Activated CD4-positive, alpha-beta memory T cell treated with anti-CD3 and anti-CD28 coated beads for 36 hours (primary cell): ENCODE measurements at regions of chr22 and their contacts with region 1.

Region 1: DNA sequence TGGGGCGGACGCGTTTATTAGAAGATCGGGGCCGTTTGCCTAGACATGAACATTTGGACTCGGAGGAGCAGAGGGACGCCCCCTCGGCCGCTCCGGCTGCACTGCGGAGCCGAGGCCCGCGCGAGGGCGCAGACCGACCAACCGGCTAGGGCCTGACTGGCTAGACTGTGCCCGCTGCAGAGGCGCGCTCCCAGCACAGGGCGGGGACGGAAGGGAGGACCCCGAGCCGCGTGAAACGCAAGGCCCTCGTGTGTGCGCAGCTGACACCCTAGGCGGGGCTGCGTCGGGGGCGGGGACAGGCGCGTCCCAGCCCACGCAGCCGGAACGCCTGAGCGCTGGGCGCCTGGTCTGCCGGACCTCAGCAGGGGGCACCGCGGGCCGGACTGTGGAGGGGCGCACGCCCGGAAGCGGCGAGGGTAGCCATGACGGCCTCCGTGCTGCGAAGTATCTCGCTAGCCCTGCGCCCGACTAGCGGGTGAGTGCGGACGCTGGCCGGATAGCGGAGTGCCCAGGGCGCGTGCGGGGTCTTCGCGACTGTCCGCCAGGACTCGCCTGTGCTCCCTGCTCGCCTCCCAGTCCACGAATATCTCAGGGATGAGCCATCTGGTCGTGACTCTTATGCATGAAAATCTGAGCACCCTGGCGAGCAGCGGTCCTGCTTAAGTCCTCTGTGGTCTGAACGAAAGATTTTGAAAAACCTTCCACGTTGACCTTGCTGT is at the start of gene MRPL40:
- DNase-seq: peak; percentile 94
- H3K4me3 Mint-ChIP-seq: peak within 1 kb of the TSS; percentile 81
- H3K27ac Mint-ChIP-seq: peak within 1 kb of the TSS; percentile 91
- H3K4me1 Mint-ChIP-seq: peaks cover 40% of the 10 kb centered on the region
- H3K27me3 Mint-ChIP-seq: no peaks in the 10 kb centered on the region
- total RNA-seq, gene MRPL40: 36.5 to 38.5 TPM

Region 2: DNA sequence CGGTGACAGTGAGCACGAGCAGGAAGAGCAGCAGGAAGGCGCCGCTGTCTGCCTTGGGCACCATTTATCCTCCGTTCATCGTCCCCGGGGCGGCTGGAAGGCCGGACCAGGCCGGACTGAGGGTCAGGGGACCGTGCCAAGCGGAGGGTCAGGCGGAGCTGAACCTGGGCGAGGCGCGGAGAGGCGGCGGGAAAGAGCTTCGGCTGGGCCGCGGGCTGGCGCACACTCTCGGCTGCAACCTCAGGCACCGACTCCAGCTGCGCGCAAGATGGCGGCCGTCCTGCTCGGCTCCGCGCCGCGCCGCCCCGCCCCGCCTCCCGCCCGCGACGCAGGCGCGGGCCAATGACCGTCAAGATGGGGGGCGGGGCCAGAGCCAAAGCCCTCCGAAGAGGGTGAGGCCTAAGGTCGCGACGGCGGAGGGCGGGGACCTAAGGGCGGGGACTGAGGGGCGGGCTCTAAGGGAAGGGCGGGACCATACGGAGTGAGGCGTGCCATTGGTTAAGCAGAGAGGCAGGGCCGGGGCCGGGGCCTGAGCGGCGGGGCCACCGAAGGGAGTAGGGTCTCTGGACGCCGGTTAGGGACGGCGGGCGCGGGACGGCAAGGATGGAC is 310.0 kb before region 1 on chr22 and contains the start of gene DGCR2:
- CTCF ChIA-PET with region 1: no interaction called
- POLR2A ChIA-PET with region 1: no interaction called
- intact Hi-C with region 1: loop called (anchors 1 kb)
- DNase-seq: peak; percentile 98
- H3K4me3 Mint-ChIP-seq: peak within 1 kb of the TSS; percentile 88
- H3K27ac Mint-ChIP-seq: peak within 1 kb of the TSS; percentile 58
- H3K4me1 Mint-ChIP-seq: peaks cover 45% of the 10 kb centered on the region
- H3K27me3 Mint-ChIP-seq: no peaks in the 10 kb centered on the region
- total RNA-seq, gene DGCR2: 17.4 to 17.6 TPM

Region 3: DNA sequence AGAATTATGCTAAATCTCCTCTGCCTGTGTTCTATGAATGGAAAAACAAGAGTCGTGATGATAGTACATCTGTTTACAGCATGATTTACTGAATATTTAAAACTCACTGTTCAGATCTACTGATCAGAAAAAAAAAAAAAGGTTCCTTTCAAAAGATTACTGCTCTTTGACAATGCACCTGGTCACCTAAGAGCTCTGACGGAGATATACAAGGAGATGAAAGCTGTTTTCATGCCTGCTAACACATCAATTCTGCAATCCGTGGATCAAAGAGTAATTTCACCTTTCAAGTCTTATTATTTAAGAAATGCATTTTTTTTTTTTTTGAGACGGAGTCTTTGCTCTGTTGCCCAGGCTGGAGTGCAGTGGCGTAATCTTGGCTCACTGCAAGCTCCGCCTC is 171.5 kb before region 1 on chr22:
- CTCF ChIA-PET with region 1: no interaction called
- POLR2A ChIA-PET with region 1: no interaction called
- intact Hi-C with region 1: no loop called
- DNase-seq: no peak
- H3K4me3 Mint-ChIP-seq: no peak overlapping the region
- H3K27ac Mint-ChIP-seq: no peak overlapping the region
- H3K4me1 Mint-ChIP-seq: peaks cover 14% of the 10 kb centered on the region
- H3K27me3 Mint-ChIP-seq: peaks cover 2% of the 10 kb centered on the region

Region 4: DNA sequence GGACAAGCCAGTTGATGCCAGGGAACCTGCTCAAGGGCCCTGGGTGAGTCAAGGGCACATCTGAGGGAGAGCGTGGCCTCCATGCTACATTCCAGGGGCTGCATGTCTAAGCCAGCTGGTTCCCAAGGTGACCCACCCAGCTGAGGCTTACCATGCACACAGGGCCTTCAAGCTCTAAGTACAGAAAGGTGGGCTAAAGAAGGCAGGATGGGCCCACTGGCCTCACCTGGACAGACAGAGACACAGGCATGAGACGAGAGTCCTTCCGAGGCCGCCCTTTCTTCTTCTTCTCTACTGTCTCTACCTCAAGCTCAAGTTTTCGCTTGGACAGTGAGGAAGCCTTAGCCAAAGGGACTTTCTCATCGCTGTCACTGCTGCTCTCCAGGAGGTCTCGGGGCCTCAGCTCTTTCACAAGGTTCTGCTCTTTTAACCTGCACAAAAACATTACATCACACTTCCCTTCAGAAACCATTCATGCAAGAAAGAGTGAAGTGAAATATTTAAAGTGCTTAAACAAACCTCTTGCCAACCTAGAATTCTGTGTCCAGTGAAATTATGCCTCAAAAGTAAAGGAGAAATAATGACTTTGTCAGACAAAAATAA is 70.7 kb before region 1 on chr22:
- CTCF ChIA-PET with region 1: no interaction called
- POLR2A ChIA-PET with region 1: no interaction called
- intact Hi-C with region 1: no loop called
- DNase-seq: no peak
- H3K4me3 Mint-ChIP-seq: no peak overlapping the region
- H3K27ac Mint-ChIP-seq: no peak overlapping the region
- H3K4me1 Mint-ChIP-seq: no peaks in the 10 kb centered on the region
- H3K27me3 Mint-ChIP-seq: no peaks in the 10 kb centered on the region

Region 5: GRCh38 chr22:19419464-19420178 is 12.7 kb before region 1 on chr22:
- CTCF ChIA-PET with region 1: interaction called, 3 read pairs
- POLR2A ChIA-PET with region 1: interaction called, 20 read pairs
- intact Hi-C with region 1: loop called (anchors 1 kb)
- DNase-seq: peak; percentile 73
- H3K4me3 Mint-ChIP-seq: no peak overlapping the region
- H3K27ac Mint-ChIP-seq: peak overlapping the region; percentile 63
- H3K4me1 Mint-ChIP-seq: peaks cover 55% of the 10 kb centered on the region
- H3K27me3 Mint-ChIP-seq: no peaks in the 10 kb centered on the region

Region 6: GRCh38 chr22:19447388-19448075 is 15.2 kb after region 1 on chr22 and contains the start of gene C22orf39:
- CTCF ChIA-PET with region 1: interaction called, 3 read pairs
- POLR2A ChIA-PET with region 1: interaction called, 59 read pairs
- intact Hi-C with region 1: loop called (anchors 1 kb)
- DNase-seq: peak; percentile 93
- H3K4me3 Mint-ChIP-seq: peak within 1 kb of the TSS; percentile 94
- H3K27ac Mint-ChIP-seq: peak within 1 kb of the TSS; percentile 91
- H3K4me1 Mint-ChIP-seq: peaks cover 47% of the 10 kb centered on the region
- H3K27me3 Mint-ChIP-seq: no peaks in the 10 kb centered on the region
- total RNA-seq, gene C22orf39: 23.3 to 23.5 TPM

Region 7: GRCh38 chr22:19576460-19577421 is 144.4 kb after region 1 on chr22:
- CTCF ChIA-PET with region 1: no interaction called
- POLR2A ChIA-PET with region 1: no interaction called
- intact Hi-C with region 1: loop called (anchors 5 kb)
- DNase-seq: peak; percentile 88
- H3K4me3 Mint-ChIP-seq: peak overlapping the region; percentile 11
- H3K27ac Mint-ChIP-seq: peak overlapping the region; percentile 83
- H3K4me1 Mint-ChIP-seq: peaks cover 45% of the 10 kb centered on the region
- H3K27me3 Mint-ChIP-seq: no peaks in the 10 kb centered on the region